ENCODE measurements at regions of chr17 and their contacts with region 1.

Region 1: DNA sequence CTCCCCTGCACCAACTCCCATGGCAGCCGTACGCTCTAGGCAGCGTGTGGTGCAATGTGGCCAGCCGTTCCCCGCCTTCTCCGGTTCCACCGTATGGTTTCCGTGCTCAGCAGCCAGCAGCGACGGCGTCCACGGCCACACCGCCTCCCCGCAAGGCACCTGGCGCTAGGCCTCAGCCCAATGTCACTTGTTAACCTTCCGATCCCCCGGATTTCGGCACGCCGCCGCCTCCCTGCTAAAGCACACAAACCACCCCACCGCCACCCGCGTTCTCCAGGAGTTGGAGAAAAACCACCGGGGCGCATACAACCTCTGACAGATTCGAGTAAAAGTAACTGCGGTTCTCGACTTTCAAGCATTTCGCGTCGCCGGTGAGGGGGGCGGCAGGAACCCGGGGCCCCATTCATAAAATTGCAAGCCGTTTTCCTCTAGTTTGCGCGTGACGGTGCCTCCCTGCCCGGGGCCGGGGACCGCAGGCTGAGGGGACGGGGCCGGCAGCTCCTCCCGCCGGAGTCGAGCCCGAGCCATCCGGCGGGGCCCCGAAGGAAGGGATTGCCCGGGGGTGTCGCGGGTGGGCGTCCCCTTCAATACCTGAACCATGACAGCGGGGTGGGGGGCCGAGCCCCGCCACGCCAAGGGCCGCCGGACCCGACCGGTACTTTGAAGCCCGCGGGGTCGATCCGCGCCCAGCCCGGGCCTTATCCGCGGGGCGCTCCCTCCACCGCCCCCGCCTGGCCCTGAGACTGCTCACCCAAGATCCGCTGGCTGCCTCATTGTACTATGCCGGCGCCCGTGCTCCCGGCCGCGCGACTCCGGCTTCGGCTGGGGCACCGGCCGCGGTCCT is at the start of gene TEX2:
- DNase-seq: peak; percentile 57
- H3K4me3 Mint-ChIP-seq: peak within 1 kb of the TSS; percentile 94
- H3K27ac Mint-ChIP-seq: peak within 1 kb of the TSS; percentile 98
- H3K4me1 Mint-ChIP-seq: peaks cover 37% of the 10 kb centered on the region
- H3K27me3 Mint-ChIP-seq: peaks cover 21% of the 10 kb centered on the region
- total RNA-seq, gene TEX2: 20.6 and 21.9 TPM in 2 replicates

Region 2: GRCh38 chr17:63842540-63843386 is 419.9 kb before region 1 on chr17 and contains the start of gene SMARCD2:
- intact Hi-C with region 1: loop called (anchors 2 kb)
- DNase-seq: peak; percentile 98
- H3K4me3 Mint-ChIP-seq: peak within 1 kb of the TSS; percentile 96
- H3K27ac Mint-ChIP-seq: peak within 1 kb of the TSS; percentile 91
- H3K4me1 Mint-ChIP-seq: peaks cover 39% of the 10 kb centered on the region
- H3K27me3 Mint-ChIP-seq: no peaks in the 10 kb centered on the region
- total RNA-seq, gene SMARCD2: 116 TPM in 2 replicates

Region 3: DNA sequence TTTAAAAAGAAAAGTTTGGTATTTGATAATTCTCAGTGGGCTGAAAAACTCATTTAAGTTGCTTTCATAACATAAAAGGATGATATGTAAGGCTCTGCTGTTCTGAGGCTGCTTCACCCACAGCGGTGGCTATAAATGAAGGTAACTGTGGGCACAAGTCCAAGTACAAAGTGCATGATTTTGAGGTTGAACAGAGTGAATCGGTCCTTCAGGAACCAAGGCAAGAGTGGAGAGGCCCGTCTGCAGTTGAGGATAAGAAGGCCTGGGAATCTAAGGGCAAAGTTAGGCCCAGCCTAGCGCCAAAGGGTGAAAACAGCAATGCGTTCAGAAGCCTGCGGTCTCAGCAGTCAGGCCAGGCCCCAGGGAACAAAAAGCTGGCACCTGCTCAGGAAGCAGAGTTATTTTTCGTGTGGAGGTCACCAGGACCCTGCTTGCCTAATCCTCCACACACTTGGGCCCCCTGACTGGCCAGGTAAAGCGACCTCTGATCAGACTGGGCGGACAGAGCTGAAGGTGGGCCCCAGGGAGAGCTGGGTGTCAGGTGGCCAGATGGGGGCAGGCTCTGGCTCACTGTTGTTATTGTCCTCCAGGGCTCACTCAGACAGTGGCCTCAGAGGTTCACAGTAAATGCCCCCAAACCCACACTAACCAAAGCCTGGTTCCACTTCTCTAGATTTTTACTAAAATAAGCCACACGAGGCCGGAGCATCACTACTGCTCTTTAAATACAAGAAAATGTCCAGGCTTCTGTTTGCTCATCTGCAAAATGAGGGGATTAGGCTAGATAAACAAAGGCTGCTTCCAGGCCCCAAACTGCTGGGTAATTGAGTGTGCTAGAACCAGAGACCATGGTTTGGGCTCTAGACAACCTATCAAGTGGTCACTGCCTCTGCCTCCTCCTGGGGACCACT is 46.0 kb before region 1 on chr17:
- intact Hi-C with region 1: loop called (anchors 2 kb)
- DNase-seq: no peak
- H3K4me3 Mint-ChIP-seq: no peak overlapping the region
- H3K27ac Mint-ChIP-seq: no peak overlapping the region
- H3K4me1 Mint-ChIP-seq: peaks cover 16% of the 10 kb centered on the region
- H3K27me3 Mint-ChIP-seq: peaks cover 2% of the 10 kb centered on the region

Region 4: GRCh38 chr17:64661976-64662773 is 399.5 kb after region 1 on chr17 and contains the start of gene SMURF2:
- intact Hi-C with region 1: loop called (anchors 1 kb)
- DNase-seq: peak; percentile 74
- H3K4me3 Mint-ChIP-seq: peak within 1 kb of the TSS; percentile 95
- H3K27ac Mint-ChIP-seq: peak within 1 kb of the TSS; percentile 97
- H3K4me1 Mint-ChIP-seq: peaks cover 28% of the 10 kb centered on the region
- H3K27me3 Mint-ChIP-seq: peaks cover 4% of the 10 kb centered on the region
- total RNA-seq, gene SMURF2: 10.8 and 11.1 TPM in 2 replicates

Measured in activated T-helper 1 cell treated with anti-CD3 and anti-CD28 coated beads, Interleukin-12 subunit alpha, Interleukin-12 subunit beta, Interleukin-2, Interleukin-4 antibody, amounts not matched to agents 30 ng/mL and 10 ng/mL and 1 ng/mL, durations not matched to agents 14 hours and 24 hours and 36 hours (primary cell).